ENCODE measurements at regions of chr7 and their contacts with region 1.

Region 1: DNA sequence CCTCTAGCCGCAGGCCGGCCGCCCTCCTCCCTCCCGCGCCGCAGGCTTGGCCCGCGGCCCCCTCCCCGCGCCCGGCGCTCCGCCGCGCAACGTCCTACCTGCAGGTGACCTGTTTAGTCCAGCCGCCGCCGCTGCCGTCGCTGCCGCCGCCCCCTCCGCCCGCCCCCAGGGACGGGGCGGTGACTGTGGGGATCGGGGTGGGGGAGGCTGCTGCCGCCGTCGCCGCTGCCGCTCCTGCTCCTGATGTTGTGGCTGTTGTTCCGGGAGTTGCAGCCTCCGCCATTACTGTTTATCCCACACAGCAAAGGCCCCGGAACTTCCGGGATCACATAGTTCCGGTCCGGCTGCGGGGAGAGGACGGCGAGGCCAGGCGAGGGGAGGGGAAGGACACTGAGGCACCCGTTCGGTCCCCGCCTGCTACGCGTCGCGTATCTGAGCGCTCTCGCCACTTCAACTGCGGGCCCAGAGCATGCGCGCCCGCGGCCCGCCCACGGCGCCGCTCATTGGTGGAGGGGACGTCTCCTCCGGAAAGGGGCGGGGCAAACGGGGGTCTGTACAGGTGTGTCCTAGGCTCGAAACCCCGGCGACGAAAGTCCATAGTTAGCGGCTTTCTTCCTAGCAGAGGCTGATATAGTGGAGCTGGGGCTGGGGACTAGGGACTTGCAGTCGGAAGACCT is at the start of gene MKRN1:
- DNase-seq: peak; percentile 96
- H3K4me3 Mint-ChIP-seq: peak within 1 kb of the TSS; percentile 97
- H3K27ac Mint-ChIP-seq: peak within 1 kb of the TSS; percentile 96
- H3K4me1 Mint-ChIP-seq: peaks cover 27% of the 10 kb centered on the region
- H3K27me3 Mint-ChIP-seq: no peaks in the 10 kb centered on the region
- total RNA-seq, gene MKRN1: 104 to 106 TPM

Region 2: GRCh38 chr7:140358412-140359051 is 120.7 kb before region 1 on chr7:
- CTCF ChIA-PET with region 1: no interaction called
- POLR2A ChIA-PET with region 1: no interaction called
- intact Hi-C with region 1: loop called (anchors 1 kb)
- DNase-seq: peak; percentile 69
- H3K4me3 Mint-ChIP-seq: peak overlapping the region; percentile 46
- H3K27ac Mint-ChIP-seq: peak overlapping the region; percentile 97
- H3K4me1 Mint-ChIP-seq: peaks cover 34% of the 10 kb centered on the region
- H3K27me3 Mint-ChIP-seq: no peaks in the 10 kb centered on the region

Region 3: DNA sequence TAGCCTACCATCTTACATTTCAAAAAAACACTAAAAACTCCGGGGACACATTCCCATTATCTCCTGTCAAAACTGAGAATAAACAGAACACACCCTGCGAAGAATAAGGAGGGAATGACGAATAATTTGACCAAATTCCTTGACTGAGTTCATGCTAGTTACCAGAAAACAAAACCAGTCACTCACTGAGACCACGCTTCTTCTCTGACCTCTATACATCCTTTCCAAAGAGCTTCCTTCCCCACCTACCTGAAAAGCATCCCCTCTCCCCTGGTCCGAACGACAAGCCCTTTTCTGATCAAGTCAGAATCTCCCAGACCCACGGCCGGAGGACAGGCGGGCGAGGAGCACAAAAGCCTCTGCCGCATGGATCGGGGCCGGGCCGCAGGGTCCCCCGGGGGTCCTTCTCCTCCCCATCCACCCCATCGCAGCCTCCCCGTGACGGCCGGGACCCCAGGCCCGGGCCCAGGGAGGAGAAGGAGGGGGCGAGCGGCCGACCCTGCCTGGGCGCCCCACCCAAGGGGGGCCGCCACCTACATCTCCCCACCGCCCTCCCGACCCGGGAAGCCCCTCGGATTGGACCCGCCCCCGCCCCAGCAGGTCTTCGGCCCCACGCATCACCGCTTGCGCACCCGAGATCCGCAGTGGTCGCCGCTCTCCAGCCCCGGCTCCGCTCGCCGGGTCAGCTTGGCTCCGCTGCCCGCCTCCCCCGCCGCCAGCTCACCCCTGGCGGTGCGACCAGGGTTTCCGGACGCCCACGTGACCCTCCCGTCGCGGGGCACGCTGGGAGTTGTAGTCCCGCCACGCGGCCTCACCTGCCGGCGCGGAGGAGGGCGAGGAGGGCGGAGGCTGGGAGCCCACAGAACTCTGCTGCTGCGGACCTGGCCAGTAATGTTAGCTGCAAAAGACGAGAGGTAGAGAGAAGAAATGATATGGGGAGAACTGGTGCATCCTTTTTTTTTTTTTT is 81.1 kb before region 1 on chr7 and contains the start of gene SLC37A3:
- CTCF ChIA-PET with region 1: interaction called, 4 read pairs
- POLR2A ChIA-PET with region 1: interaction called, 6 read pairs
- intact Hi-C with region 1: loop called (anchors 2 kb)
- DNase-seq: peak; percentile 93
- H3K4me3 Mint-ChIP-seq: peak within 1 kb of the TSS; percentile 99
- H3K27ac Mint-ChIP-seq: peak within 1 kb of the TSS; percentile 95
- H3K4me1 Mint-ChIP-seq: peaks cover 36% of the 10 kb centered on the region
- H3K27me3 Mint-ChIP-seq: no peaks in the 10 kb centered on the region
- total RNA-seq, gene SLC37A3: 74.5 to 74.7 TPM

Region 4: DNA sequence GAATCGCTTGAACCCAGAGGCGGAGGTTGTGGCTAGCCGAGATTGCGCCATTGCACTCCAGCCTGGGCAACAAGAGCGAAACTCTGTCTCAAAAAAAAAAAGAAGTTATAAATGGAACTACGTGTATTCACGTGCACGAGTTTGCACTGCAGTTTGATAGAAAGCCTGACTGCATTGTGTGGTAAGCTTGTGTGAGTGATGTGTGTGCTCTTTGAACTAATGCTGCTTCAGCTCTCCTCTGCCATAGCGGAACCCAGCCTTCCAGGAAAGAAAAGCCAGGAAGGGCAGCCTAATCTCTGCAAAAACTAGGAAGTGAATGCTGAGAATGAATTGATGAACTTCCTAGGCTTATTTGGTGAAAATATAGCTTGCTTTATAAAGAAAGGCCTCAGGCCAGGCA is 15.7 kb after region 1 on chr7:
- CTCF ChIA-PET with region 1: interaction called, 48 read pairs
- POLR2A ChIA-PET with region 1: interaction called, 3 read pairs
- intact Hi-C with region 1: loop called (anchors 1 kb)
- DNase-seq: no peak
- H3K4me3 Mint-ChIP-seq: no peak overlapping the region
- H3K27ac Mint-ChIP-seq: no peak overlapping the region
- H3K4me1 Mint-ChIP-seq: no peaks in the 10 kb centered on the region
- H3K27me3 Mint-ChIP-seq: no peaks in the 10 kb centered on the region

Region 5: GRCh38 chr7:140541513-140542227 is 62.5 kb after region 1 on chr7:
- CTCF ChIA-PET with region 1: no interaction called
- POLR2A ChIA-PET with region 1: no interaction called
- intact Hi-C with region 1: no loop called
- DNase-seq: no peak
- H3K4me3 Mint-ChIP-seq: no peak overlapping the region
- H3K27ac Mint-ChIP-seq: no peak overlapping the region
- H3K4me1 Mint-ChIP-seq: no peaks in the 10 kb centered on the region
- H3K27me3 Mint-ChIP-seq: no peaks in the 10 kb centered on the region

Region 6: DNA sequence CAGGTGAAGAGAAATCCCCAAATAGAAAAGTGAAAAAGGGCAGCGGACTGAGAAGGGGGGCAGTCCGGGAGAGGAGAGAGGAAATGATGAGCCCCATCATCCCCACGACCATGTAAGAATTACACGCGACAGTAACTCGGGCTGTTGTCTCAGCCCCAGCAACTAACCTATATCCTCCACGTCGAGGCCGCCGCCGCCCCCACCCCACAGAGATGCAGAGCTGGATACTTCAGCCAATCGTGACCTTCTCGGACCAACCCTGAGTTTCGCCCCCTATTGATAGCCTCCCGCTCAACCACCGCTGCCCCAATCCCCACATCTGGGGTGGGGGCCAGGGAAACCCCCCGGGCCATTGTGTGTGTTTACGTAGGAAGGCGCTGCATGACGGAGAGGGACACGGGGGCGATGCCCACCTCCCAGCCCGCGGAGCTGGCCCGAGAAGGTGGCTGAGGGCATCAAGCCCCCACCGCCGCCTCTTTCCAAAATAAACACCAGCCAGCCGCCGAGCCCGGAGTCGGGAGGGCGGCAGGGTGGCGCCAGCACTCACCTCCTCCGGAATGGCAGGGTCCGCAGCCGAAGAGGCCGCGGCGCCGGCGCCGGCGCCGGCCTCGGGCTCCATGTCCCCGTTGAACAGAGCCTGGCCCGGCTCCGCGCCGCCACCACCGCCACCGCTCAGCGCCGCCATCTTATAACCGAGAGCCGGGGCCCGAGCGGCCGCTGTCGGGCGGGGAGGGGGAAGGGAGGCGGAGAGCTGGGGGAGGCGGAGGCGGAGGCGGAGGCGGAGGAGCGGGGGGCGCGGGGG is 445.0 kb after region 1 on chr7:
- CTCF ChIA-PET with region 1: no interaction called
- POLR2A ChIA-PET with region 1: no interaction called
- intact Hi-C with region 1: loop called (anchors 2 kb)
- DNase-seq: peak; percentile 81
- H3K4me3 Mint-ChIP-seq: no peak overlapping the region
- H3K27ac Mint-ChIP-seq: no peak overlapping the region
- H3K4me1 Mint-ChIP-seq: peaks cover 16% of the 10 kb centered on the region
- H3K27me3 Mint-ChIP-seq: no peaks in the 10 kb centered on the region